ENCODE measurements at regions of chr18 and their contacts with region 1.

Region 1: DNA sequence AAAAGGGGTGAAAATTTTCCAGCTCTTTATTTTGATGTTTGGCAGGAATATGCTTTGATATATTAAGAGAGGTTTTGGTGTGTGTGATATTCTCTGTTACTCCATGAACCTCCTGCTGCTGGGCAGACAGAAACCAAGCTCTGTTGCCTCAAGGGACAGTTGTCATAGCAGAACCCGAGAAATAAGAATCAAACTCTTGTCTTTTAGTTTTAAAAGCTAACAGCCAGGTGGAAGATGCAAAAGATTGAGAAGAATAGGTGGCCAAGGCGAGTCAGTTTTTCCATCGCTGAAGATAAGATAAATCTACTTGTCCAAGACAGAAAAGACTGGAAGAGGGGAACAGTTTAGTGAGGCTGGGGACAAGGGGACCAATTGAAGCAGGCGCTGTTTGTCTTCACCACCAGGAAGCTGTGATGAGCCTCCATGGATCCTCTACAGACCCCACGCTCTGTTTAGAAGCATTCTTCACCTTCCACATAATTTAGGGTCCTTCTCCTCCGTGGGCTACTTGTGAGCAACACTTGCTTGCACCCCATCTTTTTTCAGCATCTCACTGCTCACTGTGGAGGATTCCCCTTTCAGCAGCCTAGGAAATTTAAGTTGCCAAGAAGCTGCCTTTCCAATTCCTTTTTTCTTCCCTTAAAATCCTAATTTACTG is 23.9 kb downstream of the PMAIP1 start:
- DNase-seq: no peak
- ATAC-seq: peak; percentile 36
- H3K4me3 ChIP-seq: peak overlapping the region in 1 of 2 experiments; percentile 12; a peak in 1 of 4 replicates
- H3K27ac ChIP-seq: peak overlapping the region; percentile 16; the same call in 1 of the 2 replicates
- H3K4me1 ChIP-seq: peaks cover 33 to 43% of the 10 kb centered on the region in 2 experiments
- H3K27me3 ChIP-seq: no peaks in the 10 kb centered on the region
- CTCF ChIP-seq: no peak
- POLR2A ChIP-seq: no peak
- RAD21 ChIP-seq: no peak

Region 2: DNA sequence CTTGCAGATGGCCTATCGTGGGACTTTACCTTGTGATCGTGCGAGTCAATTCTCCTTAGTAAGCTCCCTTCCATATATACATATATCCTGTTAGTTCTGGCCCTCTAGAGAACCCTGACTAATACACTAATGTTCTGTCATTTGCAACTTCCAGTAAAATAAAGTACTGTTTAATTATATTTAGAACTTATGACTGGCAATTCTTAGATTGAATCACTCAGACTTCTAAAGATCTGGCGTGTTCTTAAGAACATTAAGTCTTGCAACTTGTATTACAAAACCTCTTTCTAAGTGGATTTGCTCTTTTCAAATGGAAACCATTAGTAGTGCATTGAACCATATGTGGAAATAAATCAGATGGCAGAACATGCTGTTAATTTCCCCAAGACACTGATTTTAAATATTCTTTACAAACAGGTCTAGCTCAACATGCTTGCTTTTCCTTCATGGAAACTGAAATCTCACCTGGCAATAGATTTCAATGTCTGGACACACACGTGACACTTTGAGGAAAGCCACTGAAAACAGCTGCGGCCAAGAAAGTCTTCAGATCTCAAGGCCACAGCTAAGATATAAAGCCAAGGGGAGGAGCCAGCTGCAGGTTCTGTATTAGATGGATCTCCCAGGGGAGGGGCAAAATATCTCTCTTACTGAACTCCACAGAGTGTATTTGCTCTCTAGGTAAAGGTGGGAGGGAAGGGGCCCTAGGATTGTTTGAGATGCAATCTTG is 26.7 kb after region 1 on chr18:
- CTCF ChIA-PET with region 1: interaction called, 4 read pairs
- POLR2A ChIA-PET with region 1: interaction called, 9 read pairs
- RAD21 ChIA-PET with region 1: interaction called in 1 of 2 experiments, 4 read pairs
- intact Hi-C with region 1: loop called (anchors 2 kb)
- DNase-seq: no peak
- ATAC-seq: no peak
- H3K4me3 ChIP-seq: no peak overlapping the region
- H3K27ac ChIP-seq: peak overlapping the region; percentile 80; the same call in 1 of the 2 replicates
- H3K4me1 ChIP-seq: peaks cover 54 to 69% of the 10 kb centered on the region in 2 experiments
- H3K27me3 ChIP-seq: no peaks in the 10 kb centered on the region
- CTCF ChIP-seq: no peak
- POLR2A ChIP-seq: no peak
- RAD21 ChIP-seq: no peak